Activated B cell treated with CpG ODN at 0.5 μM for 24 hours (primary cell): ENCODE measurements at regions of chr7 and their contacts with region 1.

Region 1: GRCh38 chr7:50206453-50207250 is 97.9 kb upstream of the IKZF1 start:
- DNase-seq: no peak
- ATAC-seq: no peak
- H3K4me3 Mint-ChIP-seq: no peak overlapping the region
- H3K27ac Mint-ChIP-seq: peak overlapping the region; percentile 43
- H3K4me1 Mint-ChIP-seq: peaks cover 57% of the 10 kb centered on the region
- H3K27me3 Mint-ChIP-seq: no peaks in the 10 kb centered on the region
- CTCF ChIP-seq: no peak

Region 2: DNA sequence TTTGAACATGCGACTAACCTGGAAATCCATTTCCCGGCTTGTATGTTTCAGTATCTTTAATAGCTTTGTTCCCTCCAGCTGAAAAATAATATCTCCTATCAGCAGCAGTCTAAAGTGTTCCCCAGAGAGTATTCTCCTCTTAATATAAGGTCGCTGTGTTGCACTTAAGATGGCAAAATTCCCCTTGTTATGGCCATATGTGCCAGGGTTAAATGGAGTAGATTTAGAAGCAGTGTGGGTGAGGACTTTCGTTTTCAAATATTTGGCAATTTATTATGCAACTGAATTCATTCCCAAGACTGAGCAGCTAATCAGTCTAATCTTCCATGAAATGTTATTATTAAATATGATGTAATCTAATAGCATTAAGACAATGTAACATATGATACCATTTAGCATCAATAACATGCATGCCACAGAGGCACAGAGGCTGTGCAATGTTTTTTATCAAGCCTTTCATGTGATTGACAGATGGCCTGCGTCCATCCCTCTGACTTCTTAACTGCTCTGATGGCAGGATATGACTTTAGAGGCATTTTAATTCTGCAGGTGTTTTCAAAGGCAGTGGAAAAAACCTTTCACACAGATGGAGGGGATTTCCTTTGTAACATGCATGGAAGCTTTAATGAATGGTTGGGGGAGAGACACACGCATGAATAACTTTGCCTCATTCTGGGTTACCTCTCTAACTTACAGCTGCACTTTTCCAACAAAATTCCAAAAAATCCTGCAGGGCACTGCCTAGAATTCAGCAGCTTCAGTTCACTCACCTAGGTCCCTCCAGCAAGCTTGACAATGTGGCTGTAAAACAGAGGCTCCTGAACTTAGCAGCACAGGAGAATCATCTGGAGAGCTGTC is 58.5 kb before region 1 on chr7:
- CTCF ChIA-PET with region 1: interaction called, 37 read pairs
- POLR2A ChIA-PET with region 1: interaction called, 6 read pairs
- intact Hi-C with region 1: no loop called
- DNase-seq: no peak
- ATAC-seq: peak; percentile 77
- H3K4me3 Mint-ChIP-seq: peak overlapping the region; percentile 46
- H3K27ac Mint-ChIP-seq: peak overlapping the region; percentile 95
- H3K4me1 Mint-ChIP-seq: peaks cover 93% of the 10 kb centered on the region
- H3K27me3 Mint-ChIP-seq: no peaks in the 10 kb centered on the region
- CTCF ChIP-seq: no peak

Region 3: DNA sequence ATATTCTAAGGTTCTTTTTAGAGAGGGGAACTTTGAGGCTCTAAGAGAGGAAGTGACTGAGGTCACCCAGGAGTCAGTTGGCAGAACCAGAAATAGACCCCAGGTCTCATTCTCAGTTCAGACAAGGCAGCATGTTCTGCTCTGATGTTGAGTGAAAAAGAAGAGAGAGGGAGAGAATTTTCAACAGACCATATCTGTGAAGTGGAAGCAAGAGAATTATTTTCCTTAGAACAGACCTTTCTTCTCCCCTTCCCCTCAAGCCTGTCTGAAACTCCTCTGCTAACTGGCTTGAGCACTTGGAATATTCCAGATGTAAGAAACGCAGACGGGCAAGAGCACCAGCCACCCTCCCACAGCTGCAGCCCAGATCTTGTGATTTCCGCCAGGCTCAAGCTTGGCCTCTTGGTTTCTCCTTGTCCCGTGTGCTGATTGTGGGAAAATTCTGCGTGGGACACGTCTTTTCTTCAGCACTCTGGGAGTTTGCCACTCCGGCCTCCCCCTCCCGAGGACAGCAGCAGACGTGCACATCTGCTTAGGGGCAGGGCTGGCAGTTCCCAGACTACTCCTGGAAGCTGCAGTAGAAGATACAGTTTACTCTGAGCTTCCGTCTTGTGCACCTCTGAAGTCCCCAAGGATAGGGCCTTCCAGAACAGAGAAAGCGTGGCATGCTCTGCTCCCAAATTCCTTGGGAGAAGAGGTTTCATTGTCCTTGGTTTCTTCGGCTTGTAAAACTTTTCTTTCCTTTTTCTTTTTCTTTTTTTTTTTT is 75.2 kb after region 1 on chr7:
- CTCF ChIA-PET with region 1: interaction called, 3 read pairs
- POLR2A ChIA-PET with region 1: interaction called, 12 read pairs
- intact Hi-C with region 1: no loop called
- DNase-seq: no peak
- ATAC-seq: peak; percentile 89
- H3K4me3 Mint-ChIP-seq: peak overlapping the region; percentile 84
- H3K27ac Mint-ChIP-seq: peak overlapping the region; percentile 94
- H3K4me1 Mint-ChIP-seq: peaks cover 83% of the 10 kb centered on the region
- H3K27me3 Mint-ChIP-seq: no peaks in the 10 kb centered on the region
- CTCF ChIP-seq: no peak

Region 4: DNA sequence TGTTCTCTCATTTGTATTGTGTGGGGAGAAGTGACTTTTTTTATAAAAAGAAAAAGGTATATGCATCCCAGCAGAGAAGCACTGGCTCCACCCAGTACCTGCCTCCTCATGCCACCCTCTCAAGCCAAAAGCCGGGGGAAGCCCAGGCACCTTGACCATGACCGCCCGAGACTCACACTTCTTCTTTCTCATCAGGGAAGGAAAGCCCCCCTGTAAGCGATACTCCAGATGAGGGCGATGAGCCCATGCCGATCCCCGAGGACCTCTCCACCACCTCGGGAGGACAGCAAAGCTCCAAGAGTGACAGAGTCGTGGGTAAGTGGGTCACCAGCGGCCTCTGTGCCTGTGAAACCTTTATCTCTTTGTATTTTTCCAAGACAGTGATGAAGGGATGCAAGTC is 120.8 kb after region 1 on chr7:
- CTCF ChIA-PET with region 1: interaction called, 15 read pairs
- POLR2A ChIA-PET with region 1: interaction called, 4 read pairs
- intact Hi-C with region 1: no loop called
- DNase-seq: no peak
- ATAC-seq: peak; percentile 61
- H3K4me3 Mint-ChIP-seq: peak overlapping the region; percentile 66
- H3K27ac Mint-ChIP-seq: peak overlapping the region; percentile 90
- H3K4me1 Mint-ChIP-seq: peaks cover 59% of the 10 kb centered on the region
- H3K27me3 Mint-ChIP-seq: no peaks in the 10 kb centered on the region
- CTCF ChIP-seq: no peak

Region 5: DNA sequence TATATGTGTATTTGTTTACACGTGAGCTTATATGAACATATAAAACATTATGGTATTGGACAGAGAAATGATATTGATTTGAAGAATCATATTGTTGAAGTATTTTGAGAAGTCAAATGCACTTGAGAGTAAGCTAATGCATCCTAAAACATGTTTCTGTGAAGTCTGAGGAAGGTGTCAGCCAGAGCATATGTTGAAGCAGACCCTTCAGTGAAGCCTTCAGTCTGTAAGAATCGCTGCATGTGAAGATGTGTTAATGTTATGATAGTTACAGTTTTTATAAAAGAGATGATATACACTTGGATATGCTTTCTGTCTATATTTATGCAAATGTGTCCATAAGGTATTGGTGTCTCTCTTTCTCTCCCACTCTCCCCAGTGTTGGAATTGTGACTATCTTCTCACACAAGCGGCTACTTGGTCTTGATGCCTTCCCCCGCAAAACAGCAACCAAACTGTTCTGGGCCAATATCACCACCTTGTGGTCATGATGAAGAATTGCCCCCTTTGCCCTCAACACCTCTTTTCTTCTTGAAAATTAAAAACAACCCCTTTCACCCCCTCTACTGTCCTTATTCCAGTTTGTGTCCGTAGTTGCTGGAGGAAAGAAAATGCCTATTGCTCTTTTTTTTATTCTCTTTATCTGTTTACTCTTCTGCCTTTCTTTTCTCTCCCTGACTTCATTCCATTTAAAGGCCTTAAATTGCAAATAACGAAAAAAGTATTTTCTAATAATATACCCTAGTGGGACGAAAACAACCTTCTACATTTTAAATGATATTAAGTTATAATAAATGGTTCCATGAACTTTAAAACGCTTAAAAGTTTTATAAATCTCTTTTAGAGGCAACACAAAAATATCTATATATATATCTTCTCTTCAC is 162.7 kb after region 1 on chr7:
- CTCF ChIA-PET with region 1: interaction called, 104 read pairs
- POLR2A ChIA-PET with region 1: interaction called, 23 read pairs
- intact Hi-C with region 1: loop called (anchors 1 kb)
- DNase-seq: no peak
- ATAC-seq: peak; percentile 66
- H3K4me3 Mint-ChIP-seq: no peak overlapping the region
- H3K27ac Mint-ChIP-seq: peak overlapping the region; percentile 74
- H3K4me1 Mint-ChIP-seq: peaks cover 94% of the 10 kb centered on the region
- H3K27me3 Mint-ChIP-seq: no peaks in the 10 kb centered on the region
- CTCF ChIP-seq: peak; percentile 50

Region 6: DNA sequence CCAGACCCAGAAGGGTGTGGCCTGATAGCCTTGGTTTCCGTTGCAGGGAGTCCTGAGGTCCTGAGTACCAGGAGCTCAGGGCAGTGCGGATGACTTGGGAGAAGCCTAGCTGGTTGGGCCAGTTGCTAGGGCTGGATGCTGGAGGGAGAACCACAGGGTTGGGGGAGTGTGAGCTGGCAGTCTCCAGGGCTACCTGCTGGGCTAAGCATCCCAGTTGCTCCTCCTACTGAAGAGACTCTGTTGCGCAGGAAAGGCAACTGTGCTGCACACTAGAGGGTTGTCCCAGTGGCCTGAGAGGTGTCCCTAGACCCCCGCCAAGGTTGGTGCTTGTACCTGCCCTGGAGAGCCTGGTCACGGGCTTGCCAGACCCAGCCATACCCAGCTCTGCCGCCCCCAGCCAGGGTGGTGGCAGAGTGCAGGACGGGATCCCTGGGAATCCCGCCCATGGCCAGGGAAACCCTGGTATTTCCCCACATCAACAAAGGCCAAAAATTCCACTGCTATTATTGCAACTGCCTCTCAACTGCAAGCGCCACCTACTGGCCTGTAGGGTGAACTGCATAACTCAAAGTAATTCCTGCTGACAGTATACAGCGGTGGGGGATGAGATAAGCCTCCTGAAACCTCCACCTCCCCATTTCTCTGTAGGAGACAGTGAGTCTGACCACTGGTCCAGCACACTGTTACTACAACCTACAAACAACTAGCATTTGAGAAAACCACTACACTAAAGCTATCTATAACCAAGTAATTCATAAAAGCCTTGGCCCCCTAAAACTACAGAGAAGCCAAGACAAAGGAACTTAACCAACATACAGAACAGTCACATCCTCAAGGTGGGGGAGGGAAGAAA is 426.1 kb after region 1 on chr7:
- CTCF ChIA-PET with region 1: interaction called, 14 read pairs
- POLR2A ChIA-PET with region 1: interaction called, 3 read pairs
- intact Hi-C with region 1: loop called (anchors 1 kb)
- DNase-seq: peak; percentile 32
- ATAC-seq: peak; percentile 79
- H3K4me3 Mint-ChIP-seq: no peak overlapping the region
- H3K27ac Mint-ChIP-seq: no peak overlapping the region
- H3K4me1 Mint-ChIP-seq: peaks cover 14% of the 10 kb centered on the region
- H3K27me3 Mint-ChIP-seq: peaks cover 20% of the 10 kb centered on the region
- CTCF ChIP-seq: no peak

Region 7: DNA sequence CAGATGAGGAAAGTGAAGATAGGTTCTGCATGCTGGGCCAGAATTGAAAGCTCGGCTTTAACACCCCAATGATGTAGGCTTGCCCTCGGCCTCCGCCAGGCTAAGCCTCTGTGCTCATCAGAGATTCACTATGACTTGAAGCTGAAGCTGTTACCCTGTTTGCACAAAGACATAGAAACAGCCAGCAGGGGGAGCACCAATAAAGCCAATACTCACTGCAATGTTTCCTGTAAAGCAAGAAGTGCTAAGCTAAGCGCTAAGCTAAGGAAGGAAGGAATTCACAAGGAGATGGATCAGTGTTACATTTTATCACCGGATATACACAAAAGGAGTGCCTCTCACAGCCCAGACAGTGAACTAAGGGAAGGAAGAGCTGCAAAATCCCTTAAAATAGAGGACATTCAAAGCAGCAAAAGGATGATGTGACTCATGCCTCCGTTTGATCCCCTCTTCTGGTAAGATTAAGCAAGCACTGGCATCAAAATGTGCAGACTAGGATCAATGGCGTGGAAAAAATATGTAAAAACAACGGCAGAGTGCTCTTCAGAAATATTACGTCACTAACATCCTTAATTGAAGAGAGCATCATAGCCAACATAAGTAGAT is 956.2 kb after region 1 on chr7:
- CTCF ChIA-PET with region 1: interaction called, 10 read pairs
- POLR2A ChIA-PET with region 1: no interaction called
- intact Hi-C with region 1: loop called (anchors 2 kb)
- DNase-seq: peak; percentile 18
- ATAC-seq: peak; percentile 77
- H3K4me3 Mint-ChIP-seq: no peak overlapping the region
- H3K27ac Mint-ChIP-seq: no peak overlapping the region
- H3K4me1 Mint-ChIP-seq: peaks cover 7% of the 10 kb centered on the region
- H3K27me3 Mint-ChIP-seq: peaks cover 10% of the 10 kb centered on the region
- CTCF ChIP-seq: peak; percentile 20